Naive thymus-derived CD4-positive, alpha-beta T cell (primary cell): ENCODE measurements at regions of chr7 and their contacts with region 1.

Region 1: GRCh38 chr7:35985126-35985754 is 167.8 kb upstream of the EEPD1 start:
- DNase-seq: peak; percentile 56 to 81 (median 74)
- ATAC-seq: peak; percentile 97
- H3K4me3 ChIP-seq: no peak overlapping the region
- H3K4me3 Mint-ChIP-seq: no peak overlapping the region
- H3K27ac ChIP-seq: no peak overlapping the region
- H3K27ac Mint-ChIP-seq: peak overlapping the region in 1 of 9 donors; percentile 40
- H3K4me1 ChIP-seq: no peaks in the 10 kb centered on the region
- H3K4me1 Mint-ChIP-seq: no peaks in the 10 kb centered on the region
- H3K27me3 ChIP-seq: no peaks in the 10 kb centered on the region
- H3K27me3 Mint-ChIP-seq: peaks cover 0 to 4% (median 0%) of the 10 kb centered on the region in 5 donors

Region 2: GRCh38 chr7:36161981-36162380 is 176.7 kb after region 1 on chr7:
- CTCF ChIA-PET with region 1: no interaction called
- POLR2A ChIA-PET with region 1: no interaction called
- intact Hi-C with region 1: no loop called
- DNase-seq: no peak
- ATAC-seq: no peak
- H3K4me3 ChIP-seq: no peak overlapping the region
- H3K4me3 Mint-ChIP-seq: no peak overlapping the region
- H3K27ac ChIP-seq: no peak overlapping the region
- H3K27ac Mint-ChIP-seq: no peak overlapping the region
- H3K4me1 ChIP-seq: no peaks in the 10 kb centered on the region
- H3K4me1 Mint-ChIP-seq: peaks cover 0 to 17% (median 5%) of the 10 kb centered on the region in 7 donors
- H3K27me3 ChIP-seq: no peaks in the 10 kb centered on the region
- H3K27me3 Mint-ChIP-seq: peaks cover 0 to 8% (median 0%) of the 10 kb centered on the region in 5 donors

Region 3: DNA sequence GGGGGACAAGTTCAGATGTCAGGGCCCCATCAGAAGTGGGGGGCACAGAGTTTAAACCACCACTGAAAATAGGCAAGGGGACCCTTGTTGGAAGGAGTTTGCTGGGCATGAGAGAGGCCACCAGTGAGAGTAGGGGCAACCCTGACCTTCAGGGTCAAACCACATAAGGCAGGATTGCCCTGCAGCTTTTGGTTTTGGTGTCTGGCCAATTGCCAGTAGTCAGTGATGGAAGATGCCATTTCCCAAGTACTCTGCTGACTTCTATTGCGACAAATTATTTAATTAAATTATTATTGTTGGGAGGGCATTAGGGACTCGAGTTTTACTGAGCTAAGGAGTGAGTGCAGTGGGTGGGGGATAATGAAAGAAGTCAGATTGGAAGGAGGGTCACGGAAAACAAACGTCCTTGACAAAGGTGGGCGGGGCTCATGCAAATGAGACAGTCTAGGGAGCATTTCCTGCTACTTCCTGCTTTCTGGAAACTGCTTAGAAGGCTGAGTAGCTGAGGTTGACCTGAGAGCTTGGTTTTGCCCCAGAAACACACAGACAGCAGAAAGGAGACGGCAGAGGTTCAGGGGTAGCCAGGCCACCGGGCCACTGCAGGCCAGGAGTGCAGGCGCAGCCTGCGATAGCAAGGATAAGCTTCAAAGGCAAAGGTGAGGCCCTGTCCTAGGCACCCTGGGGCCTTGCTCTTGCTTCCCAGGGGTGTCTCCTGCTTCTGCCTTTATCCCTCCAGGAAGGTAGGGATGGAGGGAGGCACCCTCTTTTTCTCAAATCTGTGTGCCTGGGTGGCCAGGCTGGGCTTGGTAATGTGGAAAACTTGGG is 330.3 kb after region 1 on chr7:
- CTCF ChIA-PET with region 1: interaction called, 11 read pairs
- POLR2A ChIA-PET with region 1: no interaction called
- intact Hi-C with region 1: loop called (anchors 1 kb)
- DNase-seq: no peak
- ATAC-seq: no peak
- H3K4me3 ChIP-seq: no peak overlapping the region
- H3K4me3 Mint-ChIP-seq: no peak overlapping the region
- H3K27ac ChIP-seq: no peak overlapping the region
- H3K27ac Mint-ChIP-seq: no peak overlapping the region
- H3K4me1 ChIP-seq: no peaks in the 10 kb centered on the region
- H3K4me1 Mint-ChIP-seq: peaks cover 0 to 5% (median 3%) of the 10 kb centered on the region in 7 donors
- H3K27me3 ChIP-seq: no peaks in the 10 kb centered on the region
- H3K27me3 Mint-ChIP-seq: peaks cover 0 to 2% (median 0%) of the 10 kb centered on the region in 5 donors